ENCODE measurements at regions of chr12 and their contacts with region 1.

Region 1: DNA sequence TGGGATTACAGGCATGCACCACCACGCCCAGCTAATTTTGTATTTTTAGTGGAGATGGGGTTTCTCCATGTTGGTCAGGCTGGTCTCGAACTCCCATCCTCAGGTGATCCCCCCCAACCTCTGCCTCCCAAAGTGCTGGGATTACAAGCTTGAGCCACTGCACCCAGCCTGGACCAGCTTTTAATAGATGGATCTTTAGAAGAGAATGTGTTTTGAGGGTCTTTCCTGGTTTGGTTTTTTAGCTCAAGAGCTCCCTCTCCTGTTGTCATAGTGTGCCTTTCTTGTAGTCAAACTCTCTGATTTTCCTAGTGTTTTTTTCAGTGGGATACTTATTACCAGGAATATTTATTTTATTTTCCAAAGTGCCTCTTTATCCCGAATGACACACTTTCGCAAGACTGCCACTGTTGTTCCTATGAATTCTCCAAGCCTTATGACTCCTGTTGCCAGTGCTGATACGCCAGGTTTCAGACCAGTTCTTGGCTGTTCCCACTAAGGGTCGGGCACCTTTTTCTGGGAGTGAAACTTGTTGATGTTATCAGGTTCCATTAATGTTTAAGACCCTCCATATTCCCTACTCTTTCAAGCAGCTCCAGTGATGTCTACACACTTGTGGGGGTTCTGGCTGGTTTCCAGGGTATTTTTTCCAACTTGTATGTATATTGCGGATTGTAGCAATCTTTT is 31.5 kb upstream of the LIMA1 start:
- DNase-seq: peak; percentile 38
- H3K4me3 ChIP-seq: no peak overlapping the region
- H3K27ac ChIP-seq: no peak overlapping the region
- H3K27me3 ChIP-seq: no peaks in the 10 kb centered on the region
- CTCF ChIP-seq: peak; percentile 81

Region 2: DNA sequence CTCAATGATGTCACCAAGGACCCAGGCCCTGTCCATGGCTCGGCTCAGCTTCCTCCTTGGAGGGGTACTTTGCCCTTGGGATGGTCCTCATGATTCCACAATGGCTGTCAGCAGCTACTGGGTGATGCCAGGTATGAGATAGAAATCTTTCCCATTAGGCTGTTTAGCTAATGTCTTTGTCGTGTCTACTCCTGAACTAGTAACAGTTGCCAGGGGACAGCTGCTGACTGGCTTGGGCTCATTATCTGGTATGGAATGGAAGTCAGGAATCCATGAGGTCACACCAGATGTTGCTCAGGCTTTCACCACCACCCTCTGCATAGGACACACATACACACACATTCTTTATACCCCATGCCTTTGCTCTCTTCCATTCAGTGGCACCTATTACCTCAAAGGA is 1010.6 kb before region 1 on chr12:
- CTCF ChIA-PET with region 1: no interaction called
- POLR2A ChIA-PET with region 1: no interaction called
- DNase-seq: peak; percentile 11
- H3K4me3 ChIP-seq: no peak overlapping the region
- H3K27ac ChIP-seq: no peak overlapping the region
- H3K27me3 ChIP-seq: peaks cover 24% of the 10 kb centered on the region
- CTCF ChIP-seq: no peak

Region 3: GRCh38 chr12:50127546-50127945 is 187.2 kb before region 1 on chr12:
- CTCF ChIA-PET with region 1: interaction called, 23 read pairs
- POLR2A ChIA-PET with region 1: no interaction called
- DNase-seq: no peak
- H3K4me3 ChIP-seq: no peak overlapping the region
- H3K27ac ChIP-seq: no peak overlapping the region
- H3K27me3 ChIP-seq: no peaks in the 10 kb centered on the region
- CTCF ChIP-seq: no peak

Region 4: DNA sequence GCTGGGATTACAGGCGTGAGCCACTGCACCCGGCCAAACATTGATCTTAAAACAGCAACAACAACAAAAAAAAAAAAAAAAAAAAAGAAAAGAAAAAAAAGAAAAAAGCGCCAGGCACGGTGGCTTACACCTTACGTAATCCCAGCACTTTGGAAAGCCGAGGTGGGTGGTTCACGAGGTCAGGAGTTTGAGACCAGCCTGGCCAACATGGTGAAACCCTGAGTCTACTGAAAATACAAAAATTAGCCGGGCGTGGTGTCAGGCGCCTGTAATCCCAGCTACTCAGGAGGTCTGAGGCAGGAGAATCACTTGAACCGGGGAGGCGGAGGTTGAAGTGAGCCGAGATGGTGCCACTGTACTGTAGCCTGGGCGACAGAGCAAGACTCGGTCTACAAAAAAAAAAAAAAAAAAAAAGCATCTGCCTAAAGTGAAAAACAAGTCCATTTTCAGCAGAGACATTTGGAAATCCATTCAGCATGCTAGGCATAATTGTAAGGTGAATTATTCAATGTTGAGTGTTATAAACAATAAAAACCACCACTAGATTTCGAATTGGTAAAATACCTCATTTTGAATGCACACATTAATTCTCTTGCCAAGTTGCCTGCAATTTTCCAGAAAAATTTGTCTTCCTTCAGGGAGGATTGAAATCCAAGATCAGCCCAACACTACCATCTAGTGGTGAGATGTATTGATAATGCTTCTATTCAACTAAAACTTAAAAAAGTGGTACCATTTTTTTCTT is 139.6 kb before region 1 on chr12:
- CTCF ChIA-PET with region 1: interaction called, 34 read pairs
- POLR2A ChIA-PET with region 1: interaction called, 4 read pairs
- DNase-seq: peak; percentile 67
- H3K4me3 ChIP-seq: no peak overlapping the region
- H3K27ac ChIP-seq: no peak overlapping the region
- H3K27me3 ChIP-seq: no peaks in the 10 kb centered on the region
- CTCF ChIP-seq: peak; percentile 62

Region 5: DNA sequence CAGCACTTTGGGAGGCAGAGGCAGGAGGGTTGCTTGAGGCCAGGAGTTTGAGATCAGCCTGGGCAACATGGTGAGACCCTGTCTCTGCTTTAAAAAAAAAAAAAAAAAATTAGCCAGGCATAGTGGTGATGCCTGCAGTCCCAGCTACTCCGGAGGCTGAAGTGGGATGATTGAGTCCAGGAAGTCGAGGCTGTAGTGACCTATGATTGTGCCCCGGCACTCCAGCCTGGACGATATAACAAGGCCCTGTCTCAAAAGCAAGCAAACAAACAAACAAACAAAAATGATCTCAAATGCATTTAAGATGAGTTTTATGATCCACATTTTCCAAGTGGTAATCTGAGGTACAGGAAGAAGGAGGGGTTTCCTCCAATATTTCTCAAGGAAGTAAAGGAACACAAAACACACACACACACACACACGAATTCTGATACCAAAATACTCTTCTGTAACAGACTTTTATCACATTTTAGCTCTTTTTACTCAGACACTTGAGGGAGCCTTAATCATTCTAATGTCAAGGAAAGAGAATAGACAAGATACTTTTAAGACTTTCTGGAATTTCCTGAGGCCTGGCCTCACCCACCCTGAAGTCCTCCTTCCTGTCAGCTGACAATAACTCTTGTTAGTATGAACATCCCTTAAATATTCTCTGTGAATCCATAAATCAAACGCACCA is 103.2 kb before region 1 on chr12:
- CTCF ChIA-PET with region 1: interaction called, 10 read pairs
- POLR2A ChIA-PET with region 1: no interaction called
- DNase-seq: no peak
- H3K4me3 ChIP-seq: no peak overlapping the region
- H3K27ac ChIP-seq: no peak overlapping the region
- H3K27me3 ChIP-seq: no peaks in the 10 kb centered on the region
- CTCF ChIP-seq: no peak

Region 6: GRCh38 chr12:50283229-50283923 is 31.4 kb before region 1 on chr12 and contains the start of gene LIMA1:
- CTCF ChIA-PET with region 1: interaction called, 14 read pairs
- POLR2A ChIA-PET with region 1: interaction called, 6 read pairs
- DNase-seq: peak; percentile 55
- H3K4me3 ChIP-seq: peak within 1 kb of the TSS; percentile 95
- H3K27ac ChIP-seq: peak within 1 kb of the TSS; percentile 81
- H3K27me3 ChIP-seq: no peaks in the 10 kb centered on the region
- CTCF ChIP-seq: peak; percentile 65
- polyA plus RNA-seq, gene LIMA1: 177 and 218 TPM in 2 replicates